CD8-positive, alpha-beta memory T cell (primary cell): ENCODE measurements at regions of chr19 and their contacts with region 1.

Region 1: GRCh38 chr19:18557474-18558201 is at the start of gene KXD1:
- DNase-seq: peak; percentile 96 to 99 (median 98)
- H3K4me3 ChIP-seq: peak within 1 kb of the TSS; percentile 98
- H3K4me3 Mint-ChIP-seq: peak within 1 kb of the TSS; percentile 90 to 94 (median 92)
- H3K27ac ChIP-seq: peak within 1 kb of the TSS; percentile 96
- H3K27ac Mint-ChIP-seq: peak within 1 kb of the TSS; percentile 93 to 99 (median 98)
- H3K4me1 ChIP-seq: peaks cover 23% of the 10 kb centered on the region
- H3K4me1 Mint-ChIP-seq: peaks cover 18 to 34% (median 29%) of the 10 kb centered on the region in 3 donors
- H3K27me3 ChIP-seq: no peaks in the 10 kb centered on the region
- H3K27me3 Mint-ChIP-seq: no peaks in the 10 kb centered on the region
- total RNA-seq, gene KXD1: 127 to 128 TPM

Region 2: GRCh38 chr19:18542936-18543815 is 14.5 kb before region 1 on chr19 and contains the start of gene FKBP8:
- CTCF ChIA-PET with region 1: interaction called, 8 read pairs
- POLR2A ChIA-PET with region 1: interaction called, 16 read pairs
- DNase-seq: peak; percentile 87 to 95 (median 90)
- H3K4me3 ChIP-seq: peak within 1 kb of the TSS; percentile 55
- H3K4me3 Mint-ChIP-seq: peak within 1 kb of the TSS; percentile 88 to 97 (median 93)
- H3K27ac ChIP-seq: peak within 1 kb of the TSS; percentile 73
- H3K27ac Mint-ChIP-seq: peak within 1 kb of the TSS; percentile 89 to 99 (median 97)
- H3K4me1 ChIP-seq: peaks cover 17% of the 10 kb centered on the region
- H3K4me1 Mint-ChIP-seq: peaks cover 17 to 30% (median 19%) of the 10 kb centered on the region in 3 donors
- H3K27me3 ChIP-seq: no peaks in the 10 kb centered on the region
- H3K27me3 Mint-ChIP-seq: no peaks in the 10 kb centered on the region
- total RNA-seq, gene FKBP8: 161 to 170 TPM

Region 3: DNA sequence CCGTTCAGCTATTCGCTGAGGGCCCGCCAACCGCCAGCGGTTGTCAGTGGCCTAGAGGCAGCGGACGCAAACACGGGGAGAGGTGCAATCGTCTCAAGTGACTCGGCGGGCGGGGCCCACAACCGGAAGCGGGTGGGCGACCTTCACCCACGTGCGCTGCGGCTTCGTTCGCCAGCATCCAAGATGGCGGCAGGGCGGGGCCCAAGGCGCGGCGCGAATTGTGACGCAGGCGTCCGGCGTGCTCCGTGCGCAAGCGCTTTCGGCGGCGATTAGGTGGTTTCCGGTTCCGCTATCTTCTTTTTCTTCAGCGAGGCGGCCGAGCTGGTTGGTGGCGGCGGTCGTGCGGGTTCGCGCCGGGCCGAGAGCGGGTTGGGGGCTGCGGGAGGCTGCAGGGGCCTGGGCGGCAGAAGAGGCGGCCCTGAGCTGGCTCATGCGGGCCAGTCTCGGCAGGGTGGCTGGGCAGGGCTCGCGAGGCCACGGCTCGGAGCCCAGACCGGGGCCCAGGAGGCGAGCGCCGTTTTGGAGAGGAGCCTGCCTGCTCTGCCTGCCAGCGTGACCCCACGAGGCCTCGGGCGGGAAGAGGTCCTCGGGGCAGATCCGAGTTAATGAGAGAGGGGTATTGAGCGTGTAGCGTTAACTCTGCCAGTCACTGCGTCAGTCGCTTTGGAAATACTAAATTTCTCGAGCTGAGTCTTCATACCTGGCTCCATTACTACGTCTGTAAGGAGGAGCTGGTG is 14.1 kb after region 1 on chr19 and contains the start of gene UBA52:
- CTCF ChIA-PET with region 1: interaction called, 3 read pairs
- POLR2A ChIA-PET with region 1: interaction called, 43 read pairs
- DNase-seq: peak; percentile 98 to 99 (median 99)
- H3K4me3 ChIP-seq: peak within 1 kb of the TSS; percentile 77
- H3K4me3 Mint-ChIP-seq: peak within 1 kb of the TSS; percentile 90 to 97 (median 93)
- H3K27ac ChIP-seq: peak within 1 kb of the TSS; percentile 96
- H3K27ac Mint-ChIP-seq: peak within 1 kb of the TSS; percentile 92 to 98 (median 94)
- H3K4me1 ChIP-seq: peaks cover 22% of the 10 kb centered on the region
- H3K4me1 Mint-ChIP-seq: peaks cover 19 to 33% (median 22%) of the 10 kb centered on the region in 3 donors
- H3K27me3 ChIP-seq: no peaks in the 10 kb centered on the region
- H3K27me3 Mint-ChIP-seq: no peaks in the 10 kb centered on the region
- total RNA-seq, gene UBA52: 1,684 to 1,700 TPM

Region 4: GRCh38 chr19:18580311-18580710 is 22.7 kb after region 1 on chr19:
- CTCF ChIA-PET with region 1: no interaction called
- POLR2A ChIA-PET with region 1: interaction called, 11 read pairs
- DNase-seq: no peak
- H3K4me3 ChIP-seq: no peak overlapping the region
- H3K4me3 Mint-ChIP-seq: no peak overlapping the region
- H3K27ac ChIP-seq: no peak overlapping the region
- H3K27ac Mint-ChIP-seq: no peak overlapping the region
- H3K4me1 ChIP-seq: peaks cover 2% of the 10 kb centered on the region
- H3K4me1 Mint-ChIP-seq: peaks cover under 1 to 1% (median under 1%) of the 10 kb centered on the region in 3 donors
- H3K27me3 ChIP-seq: no peaks in the 10 kb centered on the region
- H3K27me3 Mint-ChIP-seq: no peaks in the 10 kb centered on the region

Region 5: GRCh38 chr19:18919086-18919899 is 361.7 kb after region 1 on chr19 and contains the starts of genes COPE and DDX49:
- CTCF ChIA-PET with region 1: no interaction called
- POLR2A ChIA-PET with region 1: interaction called, 12 read pairs
- DNase-seq: peak; percentile 91 to 99 (median 98)
- H3K4me3 ChIP-seq: peak within 1 kb of the TSS; percentile 94
- H3K4me3 Mint-ChIP-seq: peak within 1 kb of the TSS; percentile 85 to 97 (median 95)
- H3K27ac ChIP-seq: peak within 1 kb of the TSS; percentile 94
- H3K27ac Mint-ChIP-seq: peak within 1 kb of the TSS; percentile 64 to 99 (median 96)
- H3K4me1 ChIP-seq: peaks cover 25% of the 10 kb centered on the region
- H3K4me1 Mint-ChIP-seq: peaks cover 37 to 50% (median 43%) of the 10 kb centered on the region in 3 donors
- H3K27me3 ChIP-seq: no peaks in the 10 kb centered on the region
- H3K27me3 Mint-ChIP-seq: no peaks in the 10 kb centered on the region
- total RNA-seq, gene COPE: 177 to 184 TPM
- total RNA-seq, gene DDX49: 92.5 to 95.1 TPM